ENCODE measurements at regions of chr20 and their contacts with region 1.

Region 1: DNA sequence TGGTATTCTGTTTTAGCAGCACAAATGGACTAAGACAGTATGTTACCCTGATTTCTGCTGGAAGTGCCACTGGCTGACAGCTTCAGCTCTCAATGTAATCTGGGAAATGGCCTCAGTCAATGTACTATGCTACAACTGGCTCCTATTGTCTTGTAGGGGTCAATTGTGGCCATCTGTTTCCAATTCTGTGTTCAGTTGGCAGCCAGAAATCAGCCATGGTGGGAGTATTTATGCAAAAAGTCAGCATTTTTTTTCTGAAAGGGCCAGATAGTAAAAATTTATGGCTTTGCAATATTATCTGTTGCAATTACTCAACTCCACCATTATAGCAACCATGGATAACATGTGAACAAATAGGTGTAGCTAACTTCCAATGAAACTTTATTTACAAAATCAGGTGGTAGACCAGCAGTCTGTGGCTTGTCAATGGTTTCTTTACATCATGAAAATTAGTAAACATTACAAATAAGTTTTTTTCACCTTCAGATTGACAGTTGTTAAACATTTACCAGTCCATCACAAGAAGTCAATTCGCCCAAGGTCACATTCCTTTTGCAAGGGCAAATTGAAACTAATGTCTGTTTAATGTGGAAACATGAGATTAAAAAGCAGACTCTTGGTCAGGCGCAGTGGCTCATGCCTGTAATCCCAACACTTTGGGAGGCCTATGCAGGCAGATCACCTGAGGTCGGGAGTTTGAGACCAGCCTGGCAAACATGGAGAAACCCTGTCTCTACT is 58.3 kb upstream of the TSHZ2 start:
- DNase-seq: no peak
- ATAC-seq: no peak
- H3K4me3 ChIP-seq: no peak overlapping the region
- H3K4me1 ChIP-seq: no peaks in the 10 kb centered on the region
- CTCF ChIP-seq: no peak

Region 2: DNA sequence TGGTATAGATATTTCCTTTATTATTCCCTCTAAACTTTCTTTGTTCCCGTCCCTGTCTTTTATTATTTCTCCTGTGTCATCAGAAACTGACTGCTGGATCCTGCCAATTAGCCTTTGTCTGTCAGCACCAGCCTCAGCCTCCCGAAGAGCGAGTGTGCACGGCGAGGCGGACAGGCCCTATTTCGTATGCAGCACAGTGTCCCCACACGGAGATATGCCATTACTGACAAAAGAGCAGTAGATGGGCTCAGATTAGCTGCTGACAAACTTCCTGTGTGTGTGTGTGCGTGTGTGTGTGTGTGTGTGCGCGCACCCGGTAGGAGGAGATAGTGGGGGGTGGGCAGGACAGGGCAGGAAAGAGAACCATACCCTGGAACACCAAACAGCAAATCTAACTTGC is 622.7 kb before region 1 on chr20:
- intact Hi-C with region 1: loop called in 1 of 2 experiments (anchors 10 kb)
- DNase-seq: no peak
- ATAC-seq: no peak
- H3K4me3 ChIP-seq: no peak overlapping the region
- H3K4me1 ChIP-seq: no peaks in the 10 kb centered on the region
- CTCF ChIP-seq: no peak

Region 3: GRCh38 chr20:53138454-53139262 is 224.8 kb after region 1 on chr20:
- intact Hi-C with region 1: no loop called
- DNase-seq: no peak
- ATAC-seq: no peak
- H3K4me3 ChIP-seq: no peak overlapping the region
- H3K4me1 ChIP-seq: no peaks in the 10 kb centered on the region
- CTCF ChIP-seq: no peak

Measured in mucosa of descending colon (tissue), 3 donors.